Heart right ventricle (tissue), 16 donors: ENCODE measurements at regions of chr6 and their contacts with region 1.

Region 1: DNA sequence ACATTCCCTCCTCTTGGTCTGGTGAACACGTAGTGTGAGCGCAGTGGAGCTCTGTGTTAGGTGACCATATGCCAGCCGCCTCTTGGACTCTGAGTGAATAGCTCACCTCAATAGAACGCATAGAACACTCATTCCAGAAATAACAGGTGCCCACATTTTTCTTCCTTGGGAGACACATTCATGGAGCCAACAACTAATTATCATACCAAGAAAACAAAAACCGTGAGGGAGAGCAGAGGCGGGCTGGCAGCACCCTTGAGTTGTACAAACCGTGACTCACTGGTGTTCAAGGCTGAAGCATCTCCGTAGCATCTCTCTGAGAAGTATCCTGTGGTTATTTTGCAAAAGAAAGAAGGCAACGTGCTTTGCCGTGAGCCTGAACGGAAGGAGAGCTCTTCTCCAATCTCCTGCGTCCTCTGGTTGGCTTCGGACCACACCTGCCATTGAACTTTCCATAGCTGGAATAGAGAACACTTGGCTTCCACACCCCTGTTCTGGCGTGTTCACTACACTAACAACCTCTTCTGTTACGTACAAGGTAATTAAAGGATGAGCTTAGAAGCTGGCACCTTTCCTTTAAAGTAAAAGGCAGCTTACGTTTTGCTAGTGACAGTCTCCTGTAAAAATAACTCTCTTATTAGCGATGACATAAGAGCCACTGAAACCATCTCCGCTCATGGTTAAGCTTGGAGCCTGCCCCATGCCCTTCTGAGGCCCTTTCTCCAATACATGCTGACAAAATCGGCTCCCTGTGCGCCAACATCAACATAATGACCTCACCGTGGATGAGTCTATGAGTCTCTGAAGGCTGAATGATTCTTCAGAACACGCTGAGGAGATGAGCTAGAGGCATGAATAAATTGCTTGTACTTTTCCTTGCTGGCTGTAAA is 30.2 kb upstream of the SGK1 start:
- DNase-seq: peak in 1 of 2 donors; percentile 20
- ATAC-seq: peak in 4 of 8 donors; percentile 33 to 84 (median 42)
- H3K4me3 ChIP-seq: no peak overlapping the region
- H3K27ac ChIP-seq: peak overlapping the region in 6 of 10 donors; percentile 25 to 94 (median 42)
- H3K4me1 ChIP-seq: peaks cover 0 to 39% (median 17%) of the 10 kb centered on the region in 9 donors
- H3K27me3 ChIP-seq: no peaks in the 10 kb centered on the region
- CTCF ChIP-seq: no peak

Region 2: GRCh38 chr6:134235937-134236751 is 112.0 kb before region 1 on chr6:
- intact Hi-C with region 1: loop called in 1 of 10 experiments (anchors 10 kb)
- DNase-seq: no peak
- ATAC-seq: peak in 1 of 8 donors; percentile 21
- H3K4me3 ChIP-seq: no peak overlapping the region
- H3K27ac ChIP-seq: peak overlapping the region in 4 of 10 donors; percentile 1 to 81 (median 19)
- H3K4me1 ChIP-seq: peaks cover 0 to 59% (median 22%) of the 10 kb centered on the region in 9 donors
- H3K27me3 ChIP-seq: no peaks in the 10 kb centered on the region
- CTCF ChIP-seq: no peak

Region 3: DNA sequence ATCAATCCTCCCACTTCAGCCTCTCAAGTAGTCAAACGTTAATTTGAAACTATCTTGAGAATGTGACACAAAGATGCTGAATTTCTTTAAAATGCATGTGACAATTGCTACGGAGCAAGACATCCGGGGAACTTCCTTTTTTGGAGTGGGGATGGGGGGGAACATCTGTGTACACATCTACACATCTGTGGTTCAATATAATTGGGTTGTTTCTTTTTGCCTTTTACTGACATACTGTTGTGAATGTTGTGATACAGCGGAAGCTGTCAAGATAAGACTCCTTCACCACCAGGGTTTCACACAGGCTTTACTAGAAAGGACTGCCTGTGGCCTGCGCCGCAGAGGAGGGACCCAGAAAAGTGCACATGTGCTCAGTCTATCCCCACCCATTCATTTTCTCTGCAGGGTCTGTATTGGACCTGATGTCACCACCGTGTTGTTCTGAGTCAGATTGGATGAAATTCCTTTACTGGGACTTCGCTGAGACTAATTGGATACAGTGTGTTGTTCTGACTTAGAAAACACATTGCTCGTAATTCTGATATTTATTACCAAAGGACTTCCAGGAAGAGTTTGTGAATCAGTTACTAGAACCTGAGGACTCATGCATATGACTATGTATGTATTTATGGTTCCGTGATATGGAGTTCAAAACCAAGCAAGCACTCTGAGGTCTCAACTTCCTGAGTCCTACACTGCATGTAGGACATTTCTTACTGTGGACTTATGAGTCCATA is 68.4 kb after region 1 on chr6:
- intact Hi-C with region 1: loop called in 1 of 10 experiments (anchors 10 kb)
- DNase-seq: no peak
- ATAC-seq: no peak
- H3K4me3 ChIP-seq: no peak overlapping the region
- H3K27ac ChIP-seq: peak overlapping the region in 1 of 10 donors; percentile 24
- H3K4me1 ChIP-seq: peaks cover 0 to 49% (median 8%) of the 10 kb centered on the region in 9 donors
- H3K27me3 ChIP-seq: no peaks in the 10 kb centered on the region
- CTCF ChIP-seq: no peak

Region 4: GRCh38 chr6:134517145-134517658 is 169.0 kb after region 1 on chr6:
- intact Hi-C with region 1: loop called in 3 of 10 experiments (anchors 10 kb)
- DNase-seq: peak; percentile 72 to 84
- ATAC-seq: peak; percentile 84 to 96 (median 94)
- H3K4me3 ChIP-seq: peak overlapping the region in 6 of 10 donors; percentile 1 to 25 (median 12)
- H3K27ac ChIP-seq: peak overlapping the region; percentile 8 to 89 (median 74)
- H3K4me1 ChIP-seq: peaks cover 0 to 65% (median 51%) of the 10 kb centered on the region in 9 donors
- H3K27me3 ChIP-seq: no peaks in the 10 kb centered on the region
- CTCF ChIP-seq: no peak